Activated CD4-positive, alpha-beta memory T cell treated with anti-CD3 and anti-CD28 coated beads, Interleukin-2, amount 10 ng/mL, durations not matched to agents 7 days and 5 days (primary cell): ENCODE measurements at regions of chr19 and their contacts with region 1.

Region 1: DNA sequence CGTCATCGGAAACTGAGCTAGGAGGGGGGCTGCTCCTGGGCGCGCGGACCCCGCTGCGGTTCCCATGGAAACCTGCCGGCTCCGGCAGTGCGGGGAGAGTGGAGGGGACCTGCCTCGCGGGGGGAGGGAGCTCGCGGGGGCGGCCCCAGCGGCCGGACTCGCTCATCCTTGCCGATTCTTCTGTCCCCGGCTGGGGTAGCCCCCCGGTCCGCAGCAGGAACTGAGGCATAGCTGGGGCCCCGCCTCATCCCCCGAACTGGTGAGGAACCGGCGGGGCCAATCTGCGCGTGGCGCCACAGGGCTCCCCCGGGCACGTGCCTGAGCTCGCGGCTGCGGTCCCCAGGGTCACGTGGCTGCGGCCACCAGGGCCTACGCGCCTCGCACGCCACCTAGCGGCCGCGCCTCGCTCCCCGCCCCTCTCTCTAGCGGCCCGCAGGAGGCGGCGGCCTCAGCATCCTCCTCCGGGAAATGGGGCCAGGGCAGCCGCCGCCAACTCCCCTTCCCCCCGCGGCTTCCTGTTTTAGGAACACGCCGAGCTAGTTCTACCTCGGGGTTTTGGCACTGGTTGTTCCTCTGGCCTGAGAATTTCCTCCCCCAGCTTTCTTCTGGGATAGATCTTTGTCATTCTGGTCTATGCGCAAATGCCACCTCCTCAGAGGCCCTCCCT is 1.7 kb upstream of the ELAVL3 start:
- DNase-seq: peak; percentile 90
- H3K4me3 Mint-ChIP-seq: peak overlapping the region; percentile 64
- H3K27ac Mint-ChIP-seq: peak overlapping the region; percentile 47
- H3K4me1 Mint-ChIP-seq: peaks cover 30% of the 10 kb centered on the region
- H3K27me3 Mint-ChIP-seq: peaks cover 29% of the 10 kb centered on the region

Region 2: GRCh38 chr19:11256189-11256588 is 226.3 kb before region 1 on chr19:
- CTCF ChIA-PET with region 1: no interaction called
- POLR2A ChIA-PET with region 1: no interaction called
- DNase-seq: no peak
- H3K4me3 Mint-ChIP-seq: no peak overlapping the region
- H3K27ac Mint-ChIP-seq: no peak overlapping the region
- H3K4me1 Mint-ChIP-seq: peaks cover 2% of the 10 kb centered on the region
- H3K27me3 Mint-ChIP-seq: peaks cover 16% of the 10 kb centered on the region

Region 3: DNA sequence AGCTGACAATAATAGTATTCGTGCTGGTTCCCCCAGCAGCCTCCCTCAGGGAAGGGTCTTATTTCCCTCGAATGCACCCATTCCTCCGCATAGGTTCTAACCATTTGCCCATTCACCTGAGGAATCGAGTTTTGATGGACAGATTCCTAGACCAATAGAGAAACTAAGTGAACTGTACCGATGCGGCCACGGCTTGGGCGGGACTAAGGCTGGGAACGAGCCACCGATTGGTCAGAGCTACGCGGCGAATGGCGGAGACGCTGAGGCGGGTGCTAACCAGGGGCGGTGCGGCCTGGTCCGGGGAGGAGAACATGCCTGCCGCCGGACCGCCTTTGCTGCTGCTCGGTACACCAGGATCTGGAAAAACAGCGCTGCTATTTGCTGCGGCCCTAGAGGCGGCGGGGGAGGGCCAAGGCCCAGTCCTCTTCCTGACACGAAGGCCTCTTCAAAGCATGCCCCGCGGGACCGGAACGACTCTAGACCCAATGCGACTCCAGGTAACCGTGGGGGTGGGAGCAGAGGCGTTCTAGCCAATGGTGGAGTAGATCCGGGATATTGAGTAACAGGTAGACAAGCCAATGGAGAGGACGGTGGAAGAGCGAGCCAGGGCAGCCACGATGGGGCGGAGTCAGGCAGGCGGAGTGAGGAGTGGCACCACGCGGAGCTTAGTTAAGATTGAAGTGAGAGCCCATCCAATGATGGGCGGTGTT is 107.9 kb before region 1 on chr19 and contains the start of gene SWSAP1:
- CTCF ChIA-PET with region 1: interaction called, 45 read pairs
- POLR2A ChIA-PET with region 1: interaction called, 12 read pairs
- DNase-seq: peak; percentile 97
- H3K4me3 Mint-ChIP-seq: no peak within 1 kb of the TSS
- H3K27ac Mint-ChIP-seq: no peak within 1 kb of the TSS
- H3K4me1 Mint-ChIP-seq: peaks cover 30% of the 10 kb centered on the region
- H3K27me3 Mint-ChIP-seq: no peaks in the 10 kb centered on the region
- total RNA-seq, gene SWSAP1: 2.6 to 2.9 TPM

Region 4: GRCh38 chr19:11435058-11435832 is 47.3 kb before region 1 on chr19 and contains the starts of genes ODAD3 and PRKCSH:
- CTCF ChIA-PET with region 1: interaction called, 10 read pairs
- POLR2A ChIA-PET with region 1: no interaction called
- DNase-seq: peak; percentile 99
- H3K4me3 Mint-ChIP-seq: peak within 1 kb of the TSS; percentile 99
- H3K27ac Mint-ChIP-seq: peak within 1 kb of the TSS; percentile 93
- H3K4me1 Mint-ChIP-seq: peaks cover 24% of the 10 kb centered on the region
- H3K27me3 Mint-ChIP-seq: peaks cover 1% of the 10 kb centered on the region
- total RNA-seq, gene ODAD3: not detected
- total RNA-seq, gene PRKCSH: 315 to 318 TPM

Region 5: DNA sequence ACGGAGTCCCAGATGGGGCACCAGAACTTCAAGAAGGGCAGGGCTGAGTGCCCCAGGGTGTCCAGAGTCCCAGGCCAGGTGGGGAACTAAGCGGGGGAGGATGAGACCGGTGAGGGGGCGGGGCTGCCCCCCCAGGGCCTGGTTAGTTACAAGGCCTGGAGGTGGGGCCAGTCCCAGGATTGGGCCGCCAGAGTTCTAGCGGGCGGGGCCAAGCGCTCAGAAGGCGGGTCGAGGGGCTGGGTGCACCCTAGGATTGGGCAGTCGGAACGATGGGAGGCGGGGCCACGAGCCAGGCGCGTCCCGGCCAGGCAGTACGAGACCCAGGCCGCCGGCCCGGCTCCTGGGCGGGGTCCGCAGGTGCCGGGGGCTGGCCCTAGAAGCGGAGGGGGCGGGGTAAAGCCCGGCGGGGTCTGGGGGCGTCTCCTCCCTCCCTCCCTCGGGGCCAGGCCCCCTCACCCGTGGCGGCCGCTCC is 22.6 kb after region 1 on chr19:
- CTCF ChIA-PET with region 1: no interaction called
- POLR2A ChIA-PET with region 1: interaction called, 14 read pairs
- DNase-seq: peak; percentile 97
- H3K4me3 Mint-ChIP-seq: peak overlapping the region; percentile 81
- H3K27ac Mint-ChIP-seq: peak overlapping the region; percentile 75
- H3K4me1 Mint-ChIP-seq: peaks cover 22% of the 10 kb centered on the region
- H3K27me3 Mint-ChIP-seq: no peaks in the 10 kb centered on the region

Region 6: DNA sequence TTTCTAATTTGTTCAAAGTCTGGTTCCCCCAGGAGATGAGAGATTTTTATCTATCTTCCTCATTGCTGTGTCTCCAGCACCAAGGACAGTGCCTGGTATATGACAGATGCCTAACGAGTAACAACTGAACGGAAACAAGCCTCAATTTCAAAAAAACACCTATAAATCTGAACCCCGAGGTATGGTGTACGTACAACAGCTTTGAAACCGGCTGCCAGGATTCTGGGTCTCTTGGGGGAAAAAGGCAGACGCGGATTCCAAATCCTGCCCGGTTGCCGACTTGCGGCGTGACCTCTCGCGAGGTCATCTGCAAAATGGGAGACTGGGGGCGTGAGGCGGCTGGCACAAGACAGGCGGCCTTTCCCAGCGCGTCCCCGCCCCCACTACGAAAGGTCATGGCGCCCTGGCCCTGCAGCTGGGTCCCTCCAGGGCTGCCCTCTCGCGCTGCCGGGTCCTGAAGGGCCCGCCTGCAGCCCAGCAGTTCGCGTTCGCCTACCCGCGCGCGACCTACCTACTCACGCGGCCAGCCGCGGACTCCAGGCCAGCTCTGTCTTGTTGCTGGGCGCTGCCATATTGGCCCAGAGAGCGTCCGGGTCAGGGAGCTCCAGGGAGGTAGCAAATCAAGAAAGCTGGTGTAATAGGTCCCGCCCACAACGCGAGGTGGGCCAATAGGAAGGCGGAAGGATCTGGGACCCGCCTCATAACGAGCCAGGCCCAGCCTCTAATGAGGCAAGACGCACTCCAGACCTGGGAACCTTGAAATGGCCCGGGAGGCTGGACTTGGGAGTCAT is 46.2 kb after region 1 on chr19 and contains the start of gene ECSIT:
- CTCF ChIA-PET with region 1: interaction called, 16 read pairs
- POLR2A ChIA-PET with region 1: no interaction called
- DNase-seq: peak; percentile 94
- H3K4me3 Mint-ChIP-seq: peak within 1 kb of the TSS; percentile 98
- H3K27ac Mint-ChIP-seq: peak within 1 kb of the TSS; percentile 89
- H3K4me1 Mint-ChIP-seq: peaks cover 23% of the 10 kb centered on the region
- H3K27me3 Mint-ChIP-seq: no peaks in the 10 kb centered on the region
- total RNA-seq, gene ECSIT: 24.8 to 26.8 TPM

Region 7: GRCh38 chr19:11624069-11624463 is 141.5 kb after region 1 on chr19:
- CTCF ChIA-PET with region 1: no interaction called
- POLR2A ChIA-PET with region 1: no interaction called
- DNase-seq: no peak
- H3K4me3 Mint-ChIP-seq: no peak overlapping the region
- H3K27ac Mint-ChIP-seq: no peak overlapping the region
- H3K4me1 Mint-ChIP-seq: peaks cover 9% of the 10 kb centered on the region
- H3K27me3 Mint-ChIP-seq: peaks cover 27% of the 10 kb centered on the region

Region 8: DNA sequence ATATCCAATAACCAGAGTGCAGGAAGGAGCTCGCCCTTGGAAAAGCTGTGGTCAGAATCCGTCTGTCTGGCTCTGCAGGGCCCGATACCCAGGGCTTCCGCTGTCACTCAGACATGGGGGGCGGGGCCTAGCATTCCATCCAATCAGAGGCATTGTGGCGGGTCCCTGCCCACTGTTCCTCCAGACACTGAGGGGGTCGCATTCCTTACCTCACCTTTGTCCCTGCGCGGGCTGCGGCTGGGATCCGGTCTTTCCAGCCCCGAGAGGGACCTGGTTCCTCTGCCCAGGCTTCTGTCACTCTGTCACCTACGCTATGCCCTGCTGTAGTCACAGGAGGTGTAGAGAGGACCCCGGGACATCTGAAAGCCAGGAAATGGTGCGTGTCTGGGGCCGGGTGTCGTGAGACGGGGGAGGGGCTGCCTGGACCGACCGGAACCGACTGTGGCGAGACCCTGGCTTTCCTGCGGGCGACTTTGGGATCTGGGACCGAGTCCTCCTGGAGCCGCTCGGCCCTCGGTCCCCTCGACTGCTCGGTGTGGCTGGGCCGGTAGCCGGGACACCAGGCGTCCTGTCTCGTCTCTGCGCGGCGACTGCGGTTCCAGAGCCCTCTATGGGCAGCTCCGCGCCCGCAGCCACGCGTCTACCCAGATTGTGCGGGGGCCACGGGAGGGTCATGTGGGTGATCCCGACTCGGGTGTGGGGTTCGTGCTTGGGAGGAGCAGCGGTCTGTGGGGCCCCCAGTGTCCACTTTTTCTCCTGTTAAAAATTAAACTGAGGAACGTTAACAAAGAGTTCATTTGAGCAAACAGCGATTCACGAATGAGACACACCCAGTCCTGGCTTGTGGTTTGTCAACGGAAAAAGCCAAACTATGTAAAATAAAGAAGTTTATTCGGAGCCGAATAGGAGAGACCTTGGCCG is 405.4 kb after region 1 on chr19 and contains the start of gene ZNF69:
- CTCF ChIA-PET with region 1: no interaction called
- POLR2A ChIA-PET with region 1: no interaction called
- DNase-seq: peak; percentile 53
- H3K4me3 Mint-ChIP-seq: peak within 1 kb of the TSS; percentile 83
- H3K27ac Mint-ChIP-seq: peak within 1 kb of the TSS; percentile 73
- H3K4me1 Mint-ChIP-seq: peaks cover 21% of the 10 kb centered on the region
- H3K27me3 Mint-ChIP-seq: no peaks in the 10 kb centered on the region
- total RNA-seq, gene ZNF69: 2.3 to 2.7 TPM